ENCODE measurements at regions of chr1 and their contacts with region 1.

Region 1: DNA sequence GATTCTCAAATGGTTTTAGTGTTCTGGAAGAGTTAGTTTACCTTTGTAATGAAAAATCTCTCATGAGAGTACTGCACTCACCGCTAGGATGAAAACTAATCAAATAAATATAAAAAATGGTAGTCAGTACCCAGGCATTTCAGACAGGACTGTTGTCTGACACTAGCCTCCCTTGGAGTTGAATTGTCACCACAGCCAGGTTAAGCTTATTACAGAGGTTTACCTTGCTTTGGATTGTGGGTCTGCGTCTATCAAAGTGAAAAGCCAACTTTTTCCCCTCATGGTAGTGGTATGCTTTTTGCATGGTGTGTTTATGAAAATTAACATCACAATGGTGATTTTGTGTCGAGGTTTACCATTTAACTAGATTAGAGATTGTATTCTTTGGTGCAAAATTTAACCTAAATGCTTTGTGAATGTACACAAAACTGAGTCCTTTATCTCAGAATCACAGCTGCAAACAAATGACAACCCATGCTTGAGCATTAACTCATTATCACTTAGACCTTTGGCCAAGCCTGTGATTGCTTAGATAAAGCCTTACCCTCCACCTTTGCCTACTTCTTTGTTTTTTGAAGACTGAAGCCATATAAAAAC is 20.1 kb downstream of the RAP1A start:
- DNase-seq: no peak
- H3K4me3 ChIP-seq: no peak overlapping the region
- H3K4me3 Mint-ChIP-seq: peak overlapping the region; percentile 53
- H3K27ac Mint-ChIP-seq: no peak overlapping the region
- H3K4me1 ChIP-seq: peaks cover 36% of the 10 kb centered on the region
- H3K4me1 Mint-ChIP-seq: peaks cover 8% of the 10 kb centered on the region
- H3K27me3 ChIP-seq: no peaks in the 10 kb centered on the region
- H3K27me3 Mint-ChIP-seq: no peaks in the 10 kb centered on the region
- CTCF ChIP-seq: no peak

Region 2: DNA sequence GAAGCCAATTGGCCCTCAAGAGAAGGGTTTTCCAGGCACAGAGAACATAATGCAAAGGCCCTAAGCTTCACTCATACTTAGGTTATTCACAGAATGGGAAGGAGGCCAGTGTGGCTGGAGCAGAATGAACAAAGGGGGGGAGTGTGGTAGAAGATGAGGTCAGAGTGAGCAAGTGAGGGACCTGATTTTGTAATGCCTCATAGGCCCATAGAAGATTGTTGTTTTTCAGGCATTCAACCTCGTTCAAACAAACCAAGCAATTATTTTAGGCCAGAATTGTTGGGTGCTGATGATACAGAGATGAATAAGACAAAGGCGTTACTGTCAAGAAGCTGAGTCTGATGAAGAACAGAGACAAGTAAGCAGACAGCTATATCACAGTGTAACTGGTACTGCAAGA is 74.6 kb before region 1 on chr1:
- CTCF ChIA-PET with region 1: no interaction called
- POLR2A ChIA-PET with region 1: no interaction called
- intact Hi-C with region 1: loop called (anchors 5 kb)
- DNase-seq: no peak
- H3K4me3 ChIP-seq: no peak overlapping the region
- H3K4me3 Mint-ChIP-seq: no peak overlapping the region
- H3K27ac Mint-ChIP-seq: peak overlapping the region; percentile 73
- H3K4me1 ChIP-seq: peaks cover 45% of the 10 kb centered on the region
- H3K4me1 Mint-ChIP-seq: peaks cover 44% of the 10 kb centered on the region
- H3K27me3 ChIP-seq: no peaks in the 10 kb centered on the region
- H3K27me3 Mint-ChIP-seq: no peaks in the 10 kb centered on the region
- CTCF ChIP-seq: no peak

Region 3: GRCh38 chr1:111656086-111657017 is 16.7 kb after region 1 on chr1:
- CTCF ChIA-PET with region 1: no interaction called
- POLR2A ChIA-PET with region 1: no interaction called
- intact Hi-C with region 1: no loop called
- DNase-seq: peak in 1 of 2 experiments; percentile 48
- H3K4me3 ChIP-seq: no peak overlapping the region
- H3K4me3 Mint-ChIP-seq: no peak overlapping the region
- H3K27ac Mint-ChIP-seq: peak overlapping the region; percentile 51
- H3K4me1 ChIP-seq: peaks cover 26% of the 10 kb centered on the region
- H3K4me1 Mint-ChIP-seq: peaks cover 21% of the 10 kb centered on the region
- H3K27me3 ChIP-seq: no peaks in the 10 kb centered on the region
- H3K27me3 Mint-ChIP-seq: no peaks in the 10 kb centered on the region
- CTCF ChIP-seq: peak; percentile 36 to 44

Region 4: GRCh38 chr1:111704776-111705175 is 65.1 kb after region 1 on chr1:
- CTCF ChIA-PET with region 1: no interaction called
- POLR2A ChIA-PET with region 1: no interaction called
- intact Hi-C with region 1: no loop called
- DNase-seq: peak; percentile 50 to 54
- H3K4me3 ChIP-seq: no peak overlapping the region
- H3K4me3 Mint-ChIP-seq: no peak overlapping the region
- H3K27ac Mint-ChIP-seq: no peak overlapping the region
- H3K4me1 ChIP-seq: peaks cover 6% of the 10 kb centered on the region
- H3K4me1 Mint-ChIP-seq: peaks cover 5% of the 10 kb centered on the region
- H3K27me3 ChIP-seq: no peaks in the 10 kb centered on the region
- H3K27me3 Mint-ChIP-seq: no peaks in the 10 kb centered on the region
- CTCF ChIP-seq: no peak

Region 5: GRCh38 chr1:111720977-111721786 is 81.5 kb after region 1 on chr1:
- CTCF ChIA-PET with region 1: no interaction called
- POLR2A ChIA-PET with region 1: no interaction called
- intact Hi-C with region 1: no loop called
- DNase-seq: no peak
- H3K4me3 ChIP-seq: no peak overlapping the region
- H3K4me3 Mint-ChIP-seq: no peak overlapping the region
- H3K27ac Mint-ChIP-seq: peak overlapping the region; percentile 60
- H3K4me1 ChIP-seq: no peaks in the 10 kb centered on the region
- H3K4me1 Mint-ChIP-seq: peaks cover 18% of the 10 kb centered on the region
- H3K27me3 ChIP-seq: no peaks in the 10 kb centered on the region
- H3K27me3 Mint-ChIP-seq: no peaks in the 10 kb centered on the region
- CTCF ChIP-seq: no peak